HEK293 (cell line): ENCODE measurements at regions of chr6 and their contacts with region 1.

Region 1: GRCh38 chr6:51753635-51754034 is 333.8 kb downstream of the PKHD1 start:
- H3K4me3 ChIP-seq: no peak overlapping the region
- H3K27ac ChIP-seq: no peak overlapping the region
- H3K4me1 ChIP-seq: no peaks in the 10 kb centered on the region
- CTCF ChIP-seq: no peak

Region 2: DNA sequence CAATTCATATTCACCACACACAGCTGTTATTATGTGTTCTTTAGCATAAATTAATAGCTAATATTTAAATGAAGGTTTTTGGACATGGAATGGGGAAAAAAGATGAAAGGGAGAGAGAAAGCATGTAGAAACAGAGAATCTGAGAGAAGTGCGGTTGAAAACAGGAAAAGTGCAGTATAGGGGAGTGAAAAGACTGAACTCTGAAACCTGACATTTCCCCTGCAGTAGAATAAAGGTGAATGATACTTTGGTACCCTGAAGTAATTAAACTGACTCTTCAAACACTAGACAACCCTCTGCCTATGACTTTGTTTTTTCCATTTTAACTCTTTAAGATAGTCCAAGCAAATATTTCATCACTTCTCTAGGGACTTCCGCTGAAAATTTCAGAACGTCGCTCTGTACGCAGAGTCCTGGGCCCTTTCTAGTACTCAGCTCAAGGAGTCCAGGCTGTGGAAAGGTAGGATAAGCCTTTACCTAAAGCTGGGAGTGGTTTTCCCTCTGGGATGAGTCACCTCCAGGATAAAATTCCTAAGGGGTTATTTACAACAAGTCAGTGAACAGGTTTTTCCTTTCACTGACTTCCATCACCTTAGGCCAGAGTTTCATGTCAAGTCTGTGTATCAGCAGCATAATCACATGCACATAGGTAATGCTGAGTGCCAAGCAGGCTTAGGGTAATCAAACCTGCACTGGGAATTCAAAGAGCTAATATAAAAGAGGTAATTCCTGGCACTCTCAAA is 280.7 kb before region 1 on chr6:
- CTCF ChIA-PET with region 1: no interaction called
- POLR2A ChIA-PET with region 1: no interaction called
- H3K4me3 ChIP-seq: no peak overlapping the region
- H3K27ac ChIP-seq: no peak overlapping the region
- H3K4me1 ChIP-seq: no peaks in the 10 kb centered on the region
- CTCF ChIP-seq: no peak

Region 3: DNA sequence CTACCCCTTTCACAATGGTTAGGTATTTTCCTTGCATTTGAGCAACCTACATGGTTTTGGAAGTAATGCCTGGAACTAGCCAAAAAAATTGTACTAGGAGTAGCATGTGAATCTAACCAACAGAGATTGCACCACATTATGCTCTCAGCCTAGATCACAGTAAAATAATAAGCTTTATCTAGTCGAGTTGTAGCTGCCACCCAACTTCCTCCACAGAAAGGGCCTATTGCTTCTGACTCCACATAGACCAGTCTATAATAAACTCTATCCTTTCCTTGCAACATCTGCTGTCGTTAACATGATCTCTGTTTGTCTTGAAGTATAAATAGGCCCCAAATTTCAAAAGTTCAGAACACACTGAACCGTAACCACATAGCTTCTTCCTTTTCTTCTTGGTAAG is 41.8 kb before region 1 on chr6:
- CTCF ChIA-PET with region 1: no interaction called
- POLR2A ChIA-PET with region 1: no interaction called
- H3K4me3 ChIP-seq: no peak overlapping the region
- H3K27ac ChIP-seq: no peak overlapping the region
- H3K4me1 ChIP-seq: no peaks in the 10 kb centered on the region
- CTCF ChIP-seq: no peak

Region 4: DNA sequence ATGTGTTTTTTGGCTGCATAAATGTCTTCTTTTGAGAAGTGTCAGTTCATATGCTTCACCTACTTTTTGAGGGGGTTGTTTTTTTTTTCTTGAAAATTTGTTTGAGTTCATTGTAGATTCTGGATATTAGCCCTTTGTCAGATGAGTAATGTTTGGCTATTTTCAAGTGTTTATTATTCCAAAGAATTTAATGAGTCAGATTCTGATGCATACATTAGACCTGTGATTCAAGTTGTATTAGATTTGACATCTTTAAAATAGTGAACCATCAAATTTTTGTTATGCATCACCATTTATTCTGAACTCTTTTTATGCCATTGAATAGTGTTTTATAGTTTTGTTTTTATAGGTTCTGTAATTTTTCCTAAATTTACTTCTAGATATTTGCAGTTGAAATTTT is 14.5 kb after region 1 on chr6:
- CTCF ChIA-PET with region 1: interaction called, 16 read pairs
- POLR2A ChIA-PET with region 1: no interaction called
- H3K4me3 ChIP-seq: no peak overlapping the region
- H3K27ac ChIP-seq: no peak overlapping the region
- H3K4me1 ChIP-seq: no peaks in the 10 kb centered on the region
- CTCF ChIP-seq: no peak